ENCODE measurements at regions of chr17 and their contacts with region 1.

Region 1: GRCh38 chr17:5486204-5487124 is at the start of gene MIS12:
- DNase-seq: peak; percentile 99 to 100
- ATAC-seq: peak; percentile 95 to 98
- H3K4me3 ChIP-seq: peak within 1 kb of the TSS; percentile 81 to 98 (median 88)
- H3K27ac ChIP-seq: peak within 1 kb of the TSS; percentile 92 to 98 (median 97)
- H3K4me1 ChIP-seq: peaks cover 19 to 22% of the 10 kb centered on the region in 2 donors
- H3K27me3 ChIP-seq: no peaks in the 10 kb centered on the region
- CTCF ChIP-seq: no peak
- POLR2A ChIP-seq: peak; percentile 80 to 84
- total RNA-seq, gene MIS12: 9.1 to 45.3 (median 19.3) TPM

Region 2: GRCh38 chr17:3636154-3636907 is 1850.1 kb before region 1 on chr17 and contains the starts of genes CTNS and SHPK:
- in situ Hi-C with region 1: no loop called
- intact Hi-C with region 1: loop called (anchors 10 kb)
- DNase-seq: peak; percentile 96 to 97
- ATAC-seq: peak; percentile 89
- H3K4me3 ChIP-seq: peak within 1 kb of the TSS; percentile 82 to 100 (median 90)
- H3K27ac ChIP-seq: peak within 1 kb of the TSS; percentile 90 to 99 (median 96)
- H3K4me1 ChIP-seq: peaks cover 40 to 45% of the 10 kb centered on the region in 2 donors
- H3K27me3 ChIP-seq: no peaks in the 10 kb centered on the region
- CTCF ChIP-seq: peak in 1 of 5 experiments; percentile 17
- POLR2A ChIP-seq: peak; percentile 79 to 81
- total RNA-seq, gene CTNS: 15.0 to 141 (median 60.2) TPM
- total RNA-seq, gene SHPK: 4.1 to 4.7 (median 4.4) TPM

Region 3: GRCh38 chr17:5237541-5238016 is 248.9 kb before region 1 on chr17:
- in situ Hi-C with region 1: no loop called
- intact Hi-C with region 1: no loop called
- DNase-seq: peak in 1 of 2 donors; percentile 30
- ATAC-seq: peak in 1 of 2 donors; percentile 41
- H3K4me3 ChIP-seq: no peak overlapping the region
- H3K27ac ChIP-seq: no peak overlapping the region
- H3K4me1 ChIP-seq: peaks cover 0 to 5% of the 10 kb centered on the region in 2 donors
- H3K27me3 ChIP-seq: no peaks in the 10 kb centered on the region
- CTCF ChIP-seq: peak in 4 of 5 experiments; percentile 9 to 48 (median 35)
- POLR2A ChIP-seq: no peak

Region 4: DNA sequence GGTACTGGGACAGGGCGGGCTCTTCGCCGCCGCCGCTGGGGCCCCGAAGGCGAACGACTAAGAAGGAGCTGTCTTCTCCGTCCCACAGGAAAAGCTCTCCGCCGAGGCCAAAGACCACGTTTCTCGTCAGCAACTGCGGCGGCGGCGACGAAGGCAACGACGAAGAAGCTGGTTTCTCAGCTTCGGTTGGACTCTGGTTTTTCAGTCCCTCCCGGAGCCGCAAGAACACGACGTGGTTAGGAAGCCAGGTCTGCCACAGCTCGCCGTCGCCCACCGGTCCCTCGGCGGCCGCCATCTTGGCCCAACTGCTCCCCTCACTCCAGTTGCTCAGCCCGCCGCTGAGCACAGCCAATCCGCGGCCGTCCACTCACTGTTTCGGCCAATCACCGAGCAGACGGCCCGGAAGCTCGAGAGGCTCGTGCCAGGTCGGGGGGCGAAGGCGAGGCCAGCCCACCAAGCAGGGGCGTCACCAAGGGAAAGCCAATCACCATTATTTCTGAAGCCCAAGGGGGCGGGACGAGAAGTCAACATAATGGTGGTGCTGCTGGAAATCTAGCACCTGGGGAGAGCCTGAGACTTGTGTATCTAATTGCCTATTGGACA is 67.0 kb before region 1 on chr17 and contains the start of gene NUP88:
- in situ Hi-C with region 1: no loop called
- intact Hi-C with region 1: loop called (anchors 1 kb)
- DNase-seq: peak; percentile 95
- ATAC-seq: peak; percentile 91
- H3K4me3 ChIP-seq: peak within 1 kb of the TSS; percentile 76 to 99 (median 92)
- H3K27ac ChIP-seq: peak within 1 kb of the TSS; percentile 86 to 98 (median 94)
- H3K4me1 ChIP-seq: peaks cover 28 to 31% of the 10 kb centered on the region in 2 donors
- H3K27me3 ChIP-seq: no peaks in the 10 kb centered on the region
- CTCF ChIP-seq: no peak
- POLR2A ChIP-seq: peak; percentile 94
- total RNA-seq, gene NUP88: 140 to 197 (median 166) TPM

Region 5: DNA sequence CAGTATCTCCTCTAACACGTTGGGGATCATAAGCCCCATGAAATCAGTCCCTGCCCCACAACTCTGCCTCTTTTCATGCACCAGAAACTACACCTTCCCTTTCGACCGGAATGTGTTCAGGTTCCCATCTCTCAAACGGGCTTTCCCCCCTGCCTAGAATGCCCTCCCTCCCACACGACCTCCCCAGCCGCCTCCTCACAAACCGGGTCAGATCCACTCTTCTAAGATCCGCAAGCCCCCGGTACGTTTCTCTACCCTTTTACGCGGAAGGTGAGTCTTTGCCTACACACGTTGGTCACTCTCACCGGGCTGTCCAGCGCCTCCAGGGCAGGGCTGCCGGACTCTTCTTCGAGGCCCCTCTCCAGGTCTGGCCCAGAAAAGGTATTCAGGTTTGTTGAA is 18.4 kb before region 1 on chr17:
- in situ Hi-C with region 1: no loop called
- intact Hi-C with region 1: loop called (anchors 1 kb)
- DNase-seq: no peak
- ATAC-seq: no peak
- H3K4me3 ChIP-seq: peak overlapping the region; percentile 68 to 98 (median 79)
- H3K27ac ChIP-seq: peak overlapping the region; percentile 72 to 81 (median 78)
- H3K4me1 ChIP-seq: peaks cover 20 to 21% of the 10 kb centered on the region in 2 donors
- H3K27me3 ChIP-seq: no peaks in the 10 kb centered on the region
- CTCF ChIP-seq: no peak
- POLR2A ChIP-seq: no peak

Region 6: DNA sequence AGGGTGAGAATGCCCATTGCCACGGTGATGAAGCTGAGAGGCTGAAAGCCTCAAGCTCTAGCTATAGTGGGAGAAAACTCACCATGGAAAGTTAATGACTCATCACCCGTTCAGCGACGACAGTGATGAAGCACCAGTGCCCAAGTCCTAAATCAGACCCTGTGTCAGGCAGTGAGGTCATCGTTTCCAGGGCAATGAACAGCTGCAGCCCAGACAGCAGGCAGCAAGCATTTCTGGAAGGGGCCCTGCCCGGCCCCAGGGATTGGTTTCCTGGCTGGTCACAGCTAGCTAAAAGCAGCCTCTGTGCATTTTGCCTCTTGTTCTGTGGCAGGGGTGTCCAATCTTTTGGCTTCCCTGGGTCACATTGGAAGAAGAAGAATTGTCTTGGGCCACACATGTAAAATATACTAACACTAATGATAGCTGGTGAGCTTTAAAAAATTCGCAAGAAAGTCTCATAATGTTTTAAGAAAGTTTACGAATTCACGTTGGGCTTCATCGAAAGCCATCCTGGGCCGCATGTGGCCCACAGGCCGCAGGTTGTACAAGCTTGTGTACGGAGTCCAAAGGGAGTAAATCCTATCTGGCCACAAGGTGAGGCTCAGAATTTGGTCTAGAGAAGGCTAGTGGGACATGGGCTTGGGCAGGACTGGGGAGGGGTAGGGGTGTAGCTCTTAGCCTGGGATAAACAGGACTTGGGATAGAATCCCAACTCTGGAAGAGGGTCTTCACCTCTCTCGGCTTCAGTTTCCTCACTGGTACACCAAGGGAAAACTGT is 40.5 kb after region 1 on chr17:
- in situ Hi-C with region 1: no loop called
- intact Hi-C with region 1: loop called (anchors 1 kb)
- DNase-seq: peak; percentile 89 to 96
- ATAC-seq: peak; percentile 99 to 100
- H3K4me3 ChIP-seq: no peak overlapping the region
- H3K27ac ChIP-seq: peak overlapping the region; percentile 86 to 91 (median 87)
- H3K4me1 ChIP-seq: peaks cover 15 to 18% of the 10 kb centered on the region in 2 donors
- H3K27me3 ChIP-seq: no peaks in the 10 kb centered on the region
- CTCF ChIP-seq: no peak
- POLR2A ChIP-seq: no peak

Region 7: DNA sequence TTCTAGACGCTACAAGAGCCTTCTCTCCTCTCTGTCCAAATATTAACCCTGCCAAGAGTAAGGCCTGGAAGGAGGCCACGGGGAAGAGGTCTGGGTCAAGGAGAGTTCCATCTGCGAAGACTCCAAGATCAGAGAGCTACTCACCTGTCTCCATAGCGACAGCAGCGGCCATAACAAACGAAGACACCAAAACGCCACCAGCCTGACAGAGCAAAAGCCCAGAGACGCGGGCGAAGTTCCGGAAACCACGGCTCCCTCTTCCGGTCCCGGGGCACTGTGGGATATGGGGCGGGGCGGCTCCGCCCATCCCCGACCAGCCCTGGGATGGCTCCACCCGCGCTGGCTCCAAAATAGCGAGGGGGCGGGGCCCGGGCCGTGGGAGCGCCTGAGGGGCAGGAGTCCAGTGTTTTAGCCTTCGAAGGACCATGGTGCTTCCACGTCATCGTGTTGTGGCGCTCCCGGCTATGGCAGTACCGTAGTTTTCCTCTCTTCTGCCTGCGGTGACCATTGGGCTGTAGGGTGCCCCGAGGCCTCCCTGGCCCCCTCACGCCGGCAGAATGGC is 1165.0 kb after region 1 on chr17 and contains the starts of genes C17orf100 and MED31:
- in situ Hi-C with region 1: no loop called
- intact Hi-C with region 1: loop called (anchors 10 kb)
- DNase-seq: peak; percentile 88 to 94
- ATAC-seq: peak; percentile 93 to 96
- H3K4me3 ChIP-seq: peak within 1 kb of the TSS; percentile 60 to 95 (median 86)
- H3K27ac ChIP-seq: peak within 1 kb of the TSS; percentile 80 to 93 (median 86)
- H3K4me1 ChIP-seq: peaks cover 25 to 33% of the 10 kb centered on the region in 2 donors
- H3K27me3 ChIP-seq: peaks cover 12 to 18% (median 17%) of the 10 kb centered on the region in 3 donors
- CTCF ChIP-seq: no peak
- POLR2A ChIP-seq: peak; percentile 57 to 81
- total RNA-seq, gene C17orf100: 0.27 TPM in 1 of 4 donors, not detected in the others
- total RNA-seq, gene MED31: 3.8 to 8.6 (median 7.2) TPM

Region 8: DNA sequence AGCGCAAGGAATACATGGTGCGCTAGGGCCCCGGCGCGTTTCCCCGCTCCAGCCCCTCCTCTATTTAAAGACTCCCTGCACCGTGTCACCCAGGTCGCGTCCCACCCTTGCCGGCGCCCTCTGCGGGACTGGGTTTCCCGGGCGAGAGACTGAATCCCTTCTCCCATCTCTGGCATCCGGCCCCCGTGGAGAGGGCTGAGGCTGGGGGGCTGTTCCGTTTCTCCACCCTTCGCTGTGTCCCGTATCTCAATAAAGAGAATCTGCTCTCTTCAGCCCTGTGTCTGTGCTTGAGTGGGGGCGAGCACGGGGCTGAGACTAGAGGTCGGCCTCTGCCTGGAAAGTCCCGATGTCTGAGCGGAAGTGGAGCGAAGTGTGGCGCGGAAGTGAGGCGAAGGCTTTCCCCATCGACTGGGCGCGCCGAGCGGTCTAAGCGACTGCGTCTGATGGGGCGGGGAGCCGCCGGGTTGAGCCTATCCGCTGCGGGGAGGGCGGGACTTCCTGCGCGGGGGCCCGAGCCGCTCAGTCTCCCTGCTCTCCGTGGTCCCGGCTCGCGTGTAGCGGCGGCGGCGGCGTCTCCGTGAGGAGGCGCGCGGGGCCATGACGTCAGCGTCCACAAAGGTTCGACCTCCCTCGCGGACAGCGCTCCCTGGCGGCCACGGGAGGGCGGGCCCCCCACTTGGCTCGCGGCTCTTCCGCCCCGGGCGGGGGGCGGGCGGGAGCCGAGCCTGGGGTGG is 1528.0 kb after region 1 on chr17:
- in situ Hi-C with region 1: no loop called
- intact Hi-C with region 1: loop called (anchors 5 kb)
- DNase-seq: peak; percentile 96 to 97
- ATAC-seq: peak; percentile 71 to 73
- H3K4me3 ChIP-seq: peak overlapping the region; percentile 77 to 99 (median 86)
- H3K27ac ChIP-seq: peak overlapping the region; percentile 93 to 99 (median 96)
- H3K4me1 ChIP-seq: peaks cover 50 to 62% of the 10 kb centered on the region in 2 donors
- H3K27me3 ChIP-seq: no peaks in the 10 kb centered on the region
- CTCF ChIP-seq: peak; percentile 64 to 95 (median 80)
- POLR2A ChIP-seq: peak; percentile 89 to 91

Measured in gastrocnemius medialis (tissue), 4 donors.